K562 (cell line): ENCODE measurements at regions of chr1 and their contacts with region 1.

Region 1: GRCh38 chr1:171741872-171742576 is at the start of gene VAMP4:
- DNase-seq: peak; percentile 91 to 94 (median 94)
- ATAC-seq: peak; percentile 88
- H3K4me3 ChIP-seq: peak within 1 kb of the TSS; percentile 92
- H3K27ac ChIP-seq: peak within 1 kb of the TSS; percentile 94
- H3K4me1 ChIP-seq: peaks cover 12 to 27% of the 10 kb centered on the region in 2 experiments; a peak in 4 of 5 replicates
- H3K27me3 ChIP-seq: no peaks in the 10 kb centered on the region
- CTCF ChIP-seq: peak in 1 of 3 experiments; percentile 14; a peak in 2 of 6 replicates
- EP300 ChIP-seq: peak; percentile 61; the same call in 1 of the 2 replicates
- POLR2A ChIP-seq: peak; percentile 95
- RAD21 ChIP-seq: no peak
- polyA plus RNA-seq, gene VAMP4: 3.3 to 4.1 TPM

Region 2: GRCh38 chr1:171485375-171486047 is 256.5 kb before region 1 on chr1 and contains the start of gene PRRC2C:
- CTCF ChIA-PET with region 1: no interaction called
- POLR2A ChIA-PET with region 1: interaction called, 3 read pairs
- in situ Hi-C with region 1: no loop called
- intact Hi-C with region 1: loop called (anchors 10 kb)
- DNase-seq: peak; percentile 92 to 99 (median 93)
- ATAC-seq: peak; percentile 95
- H3K4me3 ChIP-seq: peak within 1 kb of the TSS; percentile 91
- H3K27ac ChIP-seq: peak within 1 kb of the TSS; percentile 93
- H3K4me1 ChIP-seq: peaks cover 3 to 11% of the 10 kb centered on the region in 2 experiments; a peak in 4 of 5 replicates
- H3K27me3 ChIP-seq: no peaks in the 10 kb centered on the region
- CTCF ChIP-seq: peak; percentile 85 to 97 (median 95)
- EP300 ChIP-seq: peak; percentile 54
- POLR2A ChIP-seq: peak; percentile 95
- RAD21 ChIP-seq: peak; percentile 69 to 76
- polyA plus RNA-seq, gene PRRC2C: 61.9 to 93.0 TPM

Region 3: DNA sequence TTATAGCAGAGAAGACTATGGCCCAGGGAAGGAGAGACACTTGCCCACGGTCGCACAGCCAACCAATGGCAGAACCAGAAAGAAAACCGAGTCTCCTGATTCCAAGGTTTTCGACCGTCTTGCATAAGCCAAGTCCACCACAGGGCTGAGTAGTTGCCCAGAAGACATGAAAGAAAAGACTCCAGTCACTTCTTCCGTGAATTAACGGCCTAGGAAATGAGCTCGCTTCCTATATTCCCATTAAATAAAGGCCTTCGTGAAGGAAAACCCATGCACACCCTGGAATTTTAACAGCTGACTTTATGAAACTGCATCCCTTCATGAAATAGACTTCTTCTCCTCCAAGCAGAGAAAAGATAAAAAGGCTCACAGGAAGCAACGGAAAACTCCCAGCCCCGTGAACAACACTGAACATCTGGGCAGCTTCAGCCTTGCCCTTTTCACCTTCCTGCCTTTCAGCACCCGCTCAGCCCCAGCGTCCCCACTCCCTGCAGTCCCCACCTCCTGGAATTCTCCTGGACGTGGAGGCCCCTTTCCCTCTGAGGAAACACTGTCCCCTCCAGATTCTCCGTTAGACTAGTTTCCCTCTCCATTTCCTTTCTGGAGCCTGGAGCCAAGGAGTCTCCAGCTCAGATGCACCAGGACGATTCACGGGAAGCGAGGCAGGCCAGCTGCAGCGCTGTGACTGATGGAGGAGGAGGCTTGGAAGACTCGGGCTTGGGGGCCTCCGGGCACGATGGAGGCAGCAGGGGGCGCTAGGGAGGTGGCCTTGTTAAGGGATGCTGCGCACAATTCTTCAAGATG is 86.9 kb before region 1 on chr1:
- CTCF ChIA-PET with region 1: interaction called, 3 read pairs
- POLR2A ChIA-PET with region 1: interaction called, 3 read pairs
- in situ Hi-C with region 1: no loop called
- intact Hi-C with region 1: loop called (anchors 1 kb)
- DNase-seq: peak; percentile 67 to 89 (median 74)
- ATAC-seq: peak; percentile 96
- H3K4me3 ChIP-seq: no peak overlapping the region
- H3K27ac ChIP-seq: no peak overlapping the region
- H3K4me1 ChIP-seq: peaks cover 0 to 9% of the 10 kb centered on the region in 2 experiments; a peak in 2 of 5 replicates
- H3K27me3 ChIP-seq: peaks cover 28% of the 10 kb centered on the region in 2 experiments
- CTCF ChIP-seq: peak; percentile 89 to 97 (median 92)
- EP300 ChIP-seq: no peak; the same call in 1 of the 2 replicates
- POLR2A ChIP-seq: no peak
- RAD21 ChIP-seq: peak; percentile 66 to 85

Region 4: GRCh38 chr1:171674431-171675405 is 67.3 kb before region 1 on chr1:
- CTCF ChIA-PET with region 1: no interaction called
- POLR2A ChIA-PET with region 1: no interaction called
- in situ Hi-C with region 1: no loop called
- intact Hi-C with region 1: no loop called
- DNase-seq: no peak
- ATAC-seq: peak; percentile 19; the same call in 1 of the 3 replicates
- H3K4me3 ChIP-seq: no peak overlapping the region
- H3K27ac ChIP-seq: no peak overlapping the region
- H3K4me1 ChIP-seq: peaks cover 0 to 5% of the 10 kb centered on the region in 2 experiments; a peak in 3 of 5 replicates
- H3K27me3 ChIP-seq: peaks cover 15 to 17% of the 10 kb centered on the region in 2 experiments
- CTCF ChIP-seq: no peak
- EP300 ChIP-seq: no peak
- POLR2A ChIP-seq: no peak
- RAD21 ChIP-seq: no peak

Region 5: DNA sequence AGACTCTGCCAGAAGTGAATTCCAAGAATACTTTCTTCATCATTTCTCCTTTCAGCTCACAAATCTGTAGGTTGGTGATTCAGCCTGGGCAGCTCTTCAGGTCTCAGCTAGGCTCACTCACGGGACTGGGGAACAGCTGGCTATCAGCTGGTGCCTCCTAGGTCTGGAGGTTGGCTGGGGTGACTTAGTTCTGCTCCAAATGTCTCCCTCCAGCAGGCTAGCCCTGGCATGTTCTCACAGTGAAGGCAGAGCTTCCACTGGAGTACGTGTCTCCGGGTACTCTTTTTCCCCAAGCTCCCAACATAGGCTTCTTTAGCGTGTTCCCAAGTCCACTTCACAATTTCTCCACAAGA is 12.3 kb after region 1 on chr1:
- CTCF ChIA-PET with region 1: no interaction called
- POLR2A ChIA-PET with region 1: interaction called, 24 read pairs
- in situ Hi-C with region 1: no loop called
- intact Hi-C with region 1: no loop called
- DNase-seq: peak in 2 of 4 experiments; percentile 50 to 56
- ATAC-seq: peak; percentile 65
- H3K4me3 ChIP-seq: no peak overlapping the region
- H3K27ac ChIP-seq: peak overlapping the region; percentile 20; the same call in 1 of the 3 replicates
- H3K4me1 ChIP-seq: peaks cover 16 to 25% of the 10 kb centered on the region in 2 experiments
- H3K27me3 ChIP-seq: no peaks in the 10 kb centered on the region
- CTCF ChIP-seq: no peak
- EP300 ChIP-seq: no peak
- POLR2A ChIP-seq: no peak
- RAD21 ChIP-seq: no peak

Region 6: DNA sequence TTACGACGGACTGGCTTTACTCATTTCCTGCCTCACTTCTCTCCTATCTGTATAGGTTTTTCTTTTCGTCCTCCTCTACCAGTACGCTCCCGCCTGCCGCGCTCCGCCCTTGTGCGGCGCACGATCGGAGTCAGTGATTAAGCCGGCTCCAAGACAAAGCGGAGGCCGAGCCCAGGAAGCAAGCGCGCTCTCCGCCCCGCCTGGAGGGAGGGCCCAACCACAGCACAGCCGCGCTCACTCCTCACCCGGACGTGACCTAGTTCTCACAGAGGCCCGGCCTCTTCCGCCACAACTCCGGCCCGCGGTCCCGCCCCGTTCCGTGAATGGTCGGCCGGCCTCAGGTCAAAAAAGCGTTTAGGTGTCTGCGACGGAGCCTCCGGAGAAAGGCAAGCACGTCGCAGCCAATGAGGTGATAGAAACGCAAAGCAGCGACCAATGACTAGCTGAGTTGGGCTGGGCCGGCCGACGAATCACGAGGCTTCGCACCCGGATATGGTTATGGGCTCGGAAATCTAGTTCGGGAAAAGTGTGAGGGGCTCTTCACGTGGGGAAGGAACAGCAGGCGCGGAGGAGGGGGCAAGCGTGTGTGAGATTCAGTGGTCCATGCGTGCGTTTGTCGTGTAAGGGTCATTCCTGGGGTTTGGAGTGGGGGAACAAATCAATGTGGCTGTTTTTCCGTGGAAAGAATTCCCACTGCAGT is 39.3 kb after region 1 on chr1 and contains the start of gene METTL13:
- CTCF ChIA-PET with region 1: no interaction called
- POLR2A ChIA-PET with region 1: interaction called, 4 read pairs
- in situ Hi-C with region 1: no loop called
- intact Hi-C with region 1: loop called (anchors 1 kb)
- DNase-seq: peak; percentile 97 to 100 (median 98)
- ATAC-seq: peak; percentile 98
- H3K4me3 ChIP-seq: peak within 1 kb of the TSS; percentile 76
- H3K27ac ChIP-seq: peak within 1 kb of the TSS; percentile 97
- H3K4me1 ChIP-seq: peaks cover 17 to 28% of the 10 kb centered on the region in 2 experiments; a peak in 4 of 5 replicates
- H3K27me3 ChIP-seq: no peaks in the 10 kb centered on the region
- CTCF ChIP-seq: peak in 1 of 3 experiments; percentile 7; a peak in 1 of 6 replicates
- EP300 ChIP-seq: 0 out of 2 replicates have a peak, but pooled peaks have one; percentile 7
- POLR2A ChIP-seq: peak; percentile 95
- RAD21 ChIP-seq: no peak; a peak in 1 of 4 replicates
- polyA plus RNA-seq, gene METTL13: 18.9 to 23.4 TPM

Region 7: GRCh38 chr1:171794085-171794484 is 52.1 kb after region 1 on chr1:
- CTCF ChIA-PET with region 1: no interaction called
- POLR2A ChIA-PET with region 1: no interaction called
- in situ Hi-C with region 1: no loop called
- intact Hi-C with region 1: no loop called
- DNase-seq: no peak
- ATAC-seq: peak; percentile 56
- H3K4me3 ChIP-seq: no peak overlapping the region
- H3K27ac ChIP-seq: no peak overlapping the region; the same call in 2 of the 3 replicates
- H3K4me1 ChIP-seq: peaks cover 0 to 9% of the 10 kb centered on the region in 2 experiments; a peak in 3 of 5 replicates
- H3K27me3 ChIP-seq: no peaks in the 10 kb centered on the region
- CTCF ChIP-seq: no peak
- EP300 ChIP-seq: no peak
- POLR2A ChIP-seq: no peak
- RAD21 ChIP-seq: no peak

Region 8: DNA sequence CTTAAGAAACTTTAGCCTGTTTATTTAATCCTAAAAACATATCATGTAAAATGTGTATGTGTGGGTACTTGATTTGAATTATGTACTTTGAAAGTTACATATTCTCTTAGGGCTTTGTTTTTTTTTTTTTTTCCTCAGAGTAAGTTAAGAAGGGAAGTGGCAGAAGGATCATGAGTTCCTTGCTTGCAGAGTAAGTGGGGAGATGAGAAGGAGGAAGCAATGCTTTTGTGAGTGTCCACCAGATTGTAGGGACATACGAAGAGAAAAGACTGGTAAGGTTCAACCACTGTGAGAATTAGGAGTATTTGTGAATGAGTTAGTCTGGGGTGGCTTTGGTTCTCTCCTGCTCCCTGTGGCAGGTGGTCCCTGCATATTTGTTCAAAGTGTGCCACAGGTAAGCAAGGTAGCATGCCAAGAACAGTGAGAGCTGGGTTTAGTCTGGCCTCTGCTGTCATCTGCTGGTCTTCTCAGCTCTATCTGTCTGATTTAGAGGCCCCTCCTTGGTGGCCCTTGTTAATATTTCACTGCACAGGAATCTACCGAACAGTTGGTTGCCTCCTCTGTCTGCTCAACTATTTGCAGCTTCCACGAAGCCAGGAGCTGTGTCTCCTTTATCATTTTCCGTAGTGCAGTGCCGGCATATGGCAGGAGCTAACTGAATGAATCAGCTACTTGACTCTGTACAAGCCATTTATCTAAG is 108.8 kb after region 1 on chr1:
- CTCF ChIA-PET with region 1: no interaction called
- POLR2A ChIA-PET with region 1: no interaction called
- in situ Hi-C with region 1: no loop called
- intact Hi-C with region 1: no loop called
- DNase-seq: no peak
- ATAC-seq: peak; percentile 66
- H3K4me3 ChIP-seq: no peak overlapping the region
- H3K27ac ChIP-seq: no peak overlapping the region
- H3K4me1 ChIP-seq: no peaks in the 10 kb centered on the region
- H3K27me3 ChIP-seq: peaks cover 2 to 10% of the 10 kb centered on the region in 2 experiments; a peak in 3 of 5 replicates
- CTCF ChIP-seq: peak in 2 of 3 experiments; percentile 23 to 40; a peak in 2 of 6 replicates
- EP300 ChIP-seq: no peak
- POLR2A ChIP-seq: no peak
- RAD21 ChIP-seq: peak; percentile 26 to 54; a peak in 3 of 4 replicates

Region 9: DNA sequence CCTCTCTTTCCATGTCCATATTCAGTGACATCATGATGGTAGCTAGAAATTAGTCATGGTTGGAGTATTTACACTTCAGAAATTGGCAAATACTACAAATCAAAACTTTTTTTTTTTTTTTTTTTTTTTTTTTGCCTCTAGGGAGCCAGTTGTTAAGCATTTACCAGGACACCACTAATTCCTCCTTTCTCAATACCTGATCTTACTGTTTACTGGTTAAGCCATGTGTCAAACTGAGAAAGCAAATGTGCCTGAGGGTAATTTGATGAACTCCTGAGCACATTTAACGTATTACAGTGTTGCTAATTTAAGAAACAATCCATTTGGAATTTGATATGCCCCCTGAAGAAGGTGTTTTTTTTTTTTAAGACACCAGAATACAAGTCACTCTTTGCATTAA is 193.6 kb after region 1 on chr1:
- CTCF ChIA-PET with region 1: no interaction called
- POLR2A ChIA-PET with region 1: no interaction called
- in situ Hi-C with region 1: no loop called
- intact Hi-C with region 1: no loop called
- DNase-seq: no peak
- ATAC-seq: no peak
- H3K4me3 ChIP-seq: no peak overlapping the region
- H3K27ac ChIP-seq: no peak overlapping the region
- H3K4me1 ChIP-seq: no peaks in the 10 kb centered on the region
- H3K27me3 ChIP-seq: no peaks in the 10 kb centered on the region; a peak in 1 of 5 replicates
- CTCF ChIP-seq: no peak
- EP300 ChIP-seq: no peak
- POLR2A ChIP-seq: no peak
- RAD21 ChIP-seq: no peak